Right ventricle myocardium inferior (tissue), 1 donor: ENCODE measurements at regions of chr9 and their contacts with region 1.

Region 1: DNA sequence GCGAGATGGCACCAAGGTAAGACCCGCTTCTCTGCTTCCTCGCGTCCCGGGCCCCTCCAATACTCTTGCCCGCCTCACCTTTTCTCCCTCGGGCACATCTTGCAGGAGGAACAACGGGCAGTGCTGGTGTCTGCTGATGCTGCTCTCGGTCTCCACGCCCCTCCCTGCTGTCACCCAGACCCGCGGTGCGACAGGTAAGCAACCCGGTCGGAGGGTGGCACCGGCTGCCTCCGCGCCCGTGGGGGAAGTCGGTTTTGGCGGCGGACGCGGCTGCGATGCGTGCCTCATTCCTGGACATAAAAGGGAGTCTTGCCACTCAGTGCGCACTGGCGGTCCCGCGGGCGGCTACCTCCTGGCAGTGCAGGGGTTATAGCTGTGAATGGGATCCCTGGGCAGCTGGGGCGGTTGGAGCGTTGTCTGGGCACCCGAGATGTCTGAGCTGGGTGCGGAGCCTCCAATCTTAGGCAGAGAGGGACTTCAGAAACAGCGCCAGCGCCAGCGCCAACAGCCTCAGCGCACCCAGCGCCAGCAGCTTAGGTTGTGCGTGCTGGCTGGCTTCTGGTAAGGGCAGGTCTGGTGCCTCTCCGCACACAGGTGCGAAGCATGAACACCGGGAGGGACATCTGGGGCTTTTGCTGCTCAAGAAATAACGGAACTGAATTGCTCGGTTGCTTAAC is 488 bp downstream of the COL15A1 start:
- DNase-seq: peak; percentile 68
- ATAC-seq: peak; percentile 38

Region 2: GRCh38 chr9:98906262-98907040 is 37.7 kb before region 1 on chr9:
- intact Hi-C with region 1: loop called (anchors 5 kb)
- DNase-seq: peak; percentile 81
- ATAC-seq: no peak